ENCODE measurements at regions of chr17 and their contacts with region 1.

Region 1: DNA sequence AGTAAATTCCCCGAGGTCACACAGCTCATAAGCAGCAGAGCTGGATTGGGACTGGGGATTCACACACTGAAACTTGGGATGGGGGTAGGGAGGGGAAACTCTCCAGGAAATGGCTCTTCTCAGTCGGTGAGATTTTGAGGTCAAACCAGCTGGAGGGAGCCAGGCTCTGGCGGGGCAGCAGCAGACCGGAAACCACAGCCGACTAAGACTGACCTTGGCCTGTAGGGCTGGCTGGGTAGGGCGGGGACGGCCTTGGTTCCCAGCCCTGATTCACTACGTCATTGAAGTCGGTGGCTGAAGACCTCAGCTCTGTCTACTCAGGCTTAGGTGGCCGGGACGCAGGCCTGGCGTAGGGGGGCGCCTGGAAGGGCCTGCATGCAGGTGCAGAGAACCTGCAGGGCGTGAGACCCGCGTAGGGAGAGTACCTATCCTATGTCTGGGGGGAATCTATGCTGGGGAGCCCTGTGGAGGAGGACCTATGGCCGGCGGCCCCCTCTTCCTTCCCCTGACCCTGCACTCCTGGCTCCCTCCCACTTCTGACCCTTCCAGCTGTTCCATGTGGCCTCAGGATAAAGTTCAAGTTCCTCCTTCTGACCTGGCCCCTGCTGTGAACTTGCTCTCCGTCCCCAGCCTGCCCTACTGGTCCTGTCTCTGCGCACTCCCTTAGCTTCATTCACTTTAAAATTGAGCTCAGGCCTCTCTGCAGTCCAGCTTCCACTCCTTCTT is 11.9 kb upstream of the SLC4A1 start:
- DNase-seq: peak; percentile 66
- ATAC-seq: peak; percentile 100
- H3K4me3 ChIP-seq: no peak overlapping the region
- H3K27ac ChIP-seq: peak overlapping the region; percentile 26
- H3K4me1 ChIP-seq: peaks cover 16% of the 10 kb centered on the region
- H3K27me3 ChIP-seq: no peaks in the 10 kb centered on the region; a peak in 1 of 4 replicates
- CTCF ChIP-seq: no peak
- EP300 ChIP-seq: 0 out of 4 replicates have a peak, but pooled peaks have one; percentile 8 to 21
- POLR2A ChIP-seq: no peak
- RAD21 ChIP-seq: no peak

Region 2: GRCh38 chr17:44229090-44229489 is 50.7 kb before region 1 on chr17:
- CTCF ChIA-PET with region 1: no interaction called
- POLR2A ChIA-PET with region 1: no interaction called
- RAD21 ChIA-PET with region 1: no interaction called
- SMC1A ChIA-PET with region 1: no interaction called
- in situ Hi-C with region 1: loop called (anchors 5 kb)
- intact Hi-C with region 1: no loop called
- DNase-seq: no peak
- ATAC-seq: no peak
- H3K4me3 ChIP-seq: no peak overlapping the region
- H3K27ac ChIP-seq: no peak overlapping the region
- H3K4me1 ChIP-seq: no peaks in the 10 kb centered on the region
- H3K27me3 ChIP-seq: no peaks in the 10 kb centered on the region
- CTCF ChIP-seq: no peak
- EP300 ChIP-seq: no peak
- POLR2A ChIP-seq: no peak
- RAD21 ChIP-seq: no peak